HEK293 (cell line): ENCODE measurements at regions of chrX and their contacts with region 1.

Region 1: GRCh38 chrX:108199691-108200090 is 108.1 kb downstream of the ATG4A start:
- H3K4me3 ChIP-seq: no peak overlapping the region
- H3K27ac ChIP-seq: no peak overlapping the region
- H3K4me1 ChIP-seq: no peaks in the 10 kb centered on the region
- CTCF ChIP-seq: peak; percentile 47; the same call in 1 of the 2 replicates

Region 2: DNA sequence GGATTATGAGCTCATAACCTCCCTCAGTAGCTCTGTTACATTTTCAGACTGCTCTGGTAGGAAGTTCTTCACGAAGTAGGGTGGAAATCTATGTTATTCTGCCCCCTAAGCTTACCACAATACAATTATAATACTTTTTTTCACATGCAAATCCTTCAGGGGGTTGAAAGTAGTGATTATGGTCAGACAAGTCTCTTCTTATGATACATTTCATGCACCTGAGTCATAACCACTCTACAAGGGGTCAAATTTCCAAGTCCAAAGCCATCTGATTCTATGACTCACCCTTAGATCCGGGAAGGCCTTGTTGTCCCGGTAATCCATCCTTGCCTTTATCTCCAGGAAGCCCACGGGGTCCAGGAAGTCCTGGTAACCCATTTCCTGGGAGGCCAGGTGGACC is 12.9 kb before region 1 on chrX:
- CTCF ChIA-PET with region 1: interaction called, 17 read pairs
- POLR2A ChIA-PET with region 1: no interaction called
- H3K4me3 ChIP-seq: no peak overlapping the region
- H3K27ac ChIP-seq: no peak overlapping the region
- H3K4me1 ChIP-seq: no peaks in the 10 kb centered on the region
- CTCF ChIP-seq: no peak

Region 3: GRCh38 chrX:108216919-108217571 is 17.4 kb after region 1 on chrX:
- CTCF ChIA-PET with region 1: interaction called, 20 read pairs
- POLR2A ChIA-PET with region 1: no interaction called
- H3K4me3 ChIP-seq: no peak overlapping the region
- H3K27ac ChIP-seq: no peak overlapping the region
- H3K4me1 ChIP-seq: no peaks in the 10 kb centered on the region
- CTCF ChIP-seq: no peak

Region 4: DNA sequence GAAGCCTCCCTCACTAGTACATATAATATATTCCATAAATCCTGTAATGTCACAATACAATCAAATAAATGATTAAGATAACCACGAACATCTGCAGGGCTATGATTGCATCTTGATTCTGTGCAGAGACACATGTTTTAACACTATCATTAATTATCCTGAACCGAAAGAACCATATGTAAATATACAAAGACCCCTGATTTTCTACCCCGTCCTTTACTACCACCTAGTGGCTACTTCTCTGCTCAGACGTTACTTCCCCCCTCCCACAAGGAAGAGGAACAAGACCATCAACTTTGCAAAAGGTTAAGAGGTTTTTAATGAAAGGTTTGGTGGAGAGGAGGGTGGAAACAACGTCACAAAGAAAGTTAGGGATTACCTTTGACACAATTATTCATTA is 104.5 kb after region 1 on chrX:
- CTCF ChIA-PET with region 1: interaction called, 18 read pairs
- POLR2A ChIA-PET with region 1: no interaction called
- H3K4me3 ChIP-seq: no peak overlapping the region
- H3K27ac ChIP-seq: no peak overlapping the region
- H3K4me1 ChIP-seq: peaks cover 2% of the 10 kb centered on the region; the same call in 1 of the 2 replicates
- CTCF ChIP-seq: peak; percentile 46; the same call in 1 of the 2 replicates

Region 5: GRCh38 chrX:108537005-108537404 is 337.3 kb after region 1 on chrX:
- CTCF ChIA-PET with region 1: interaction called, 11 read pairs
- POLR2A ChIA-PET with region 1: no interaction called
- H3K4me3 ChIP-seq: no peak overlapping the region
- H3K27ac ChIP-seq: no peak overlapping the region
- H3K4me1 ChIP-seq: no peaks in the 10 kb centered on the region
- CTCF ChIP-seq: peak; percentile 47